CD4-positive, alpha-beta T cell (primary cell): ENCODE measurements at regions of chr19 and their contacts with region 1.

Region 1: DNA sequence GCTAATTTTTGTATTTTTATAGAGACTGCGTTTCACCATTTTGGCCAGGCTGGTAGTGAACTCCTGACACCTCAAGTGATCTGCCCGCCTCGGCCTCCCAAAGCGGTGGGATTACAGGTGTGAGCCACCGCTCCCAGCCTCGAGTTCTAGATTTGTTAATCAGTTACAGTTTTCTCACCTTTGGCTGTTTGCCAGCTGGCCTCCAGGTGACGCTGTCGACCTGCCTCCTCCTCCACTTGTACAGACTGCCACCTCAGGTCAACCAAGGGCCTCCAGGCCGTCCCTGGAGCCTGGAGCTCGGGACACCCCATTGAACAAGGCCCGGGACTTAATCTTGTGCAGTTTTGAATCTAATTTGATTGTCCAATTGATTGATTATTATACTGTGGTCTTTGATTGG is 45.5 kb downstream of the IER2 start:
- DNase-seq: peak; percentile 34 to 80 (median 56)
- ATAC-seq: no peak
- H3K4me3 ChIP-seq: no peak overlapping the region
- H3K4me3 Mint-ChIP-seq: peak overlapping the region; percentile 20
- H3K27ac ChIP-seq: no peak overlapping the region
- H3K27ac Mint-ChIP-seq: peak overlapping the region; percentile 51
- H3K4me1 ChIP-seq: peaks cover 48% of the 10 kb centered on the region
- H3K4me1 Mint-ChIP-seq: peaks cover 21% of the 10 kb centered on the region
- H3K27me3 ChIP-seq: no peaks in the 10 kb centered on the region
- H3K27me3 Mint-ChIP-seq: no peaks in the 10 kb centered on the region
- CTCF ChIP-seq: peak; percentile 59

Region 2: GRCh38 chr19:12722566-12723380 is 472.9 kb before region 1 on chr19:
- CTCF ChIA-PET with region 1: no interaction called
- POLR2A ChIA-PET with region 1: no interaction called
- intact Hi-C with region 1: no loop called
- DNase-seq: peak; percentile 80 to 99 (median 90)
- ATAC-seq: peak; percentile 87
- H3K4me3 ChIP-seq: peak overlapping the region; percentile 69
- H3K4me3 Mint-ChIP-seq: peak overlapping the region; percentile 98
- H3K27ac ChIP-seq: peak overlapping the region; percentile 48 to 78
- H3K27ac Mint-ChIP-seq: peak overlapping the region; percentile 89
- H3K4me1 ChIP-seq: peaks cover 39% of the 10 kb centered on the region
- H3K4me1 Mint-ChIP-seq: peaks cover 47% of the 10 kb centered on the region
- H3K27me3 ChIP-seq: no peaks in the 10 kb centered on the region
- H3K27me3 Mint-ChIP-seq: no peaks in the 10 kb centered on the region
- CTCF ChIP-seq: no peak

Region 3: DNA sequence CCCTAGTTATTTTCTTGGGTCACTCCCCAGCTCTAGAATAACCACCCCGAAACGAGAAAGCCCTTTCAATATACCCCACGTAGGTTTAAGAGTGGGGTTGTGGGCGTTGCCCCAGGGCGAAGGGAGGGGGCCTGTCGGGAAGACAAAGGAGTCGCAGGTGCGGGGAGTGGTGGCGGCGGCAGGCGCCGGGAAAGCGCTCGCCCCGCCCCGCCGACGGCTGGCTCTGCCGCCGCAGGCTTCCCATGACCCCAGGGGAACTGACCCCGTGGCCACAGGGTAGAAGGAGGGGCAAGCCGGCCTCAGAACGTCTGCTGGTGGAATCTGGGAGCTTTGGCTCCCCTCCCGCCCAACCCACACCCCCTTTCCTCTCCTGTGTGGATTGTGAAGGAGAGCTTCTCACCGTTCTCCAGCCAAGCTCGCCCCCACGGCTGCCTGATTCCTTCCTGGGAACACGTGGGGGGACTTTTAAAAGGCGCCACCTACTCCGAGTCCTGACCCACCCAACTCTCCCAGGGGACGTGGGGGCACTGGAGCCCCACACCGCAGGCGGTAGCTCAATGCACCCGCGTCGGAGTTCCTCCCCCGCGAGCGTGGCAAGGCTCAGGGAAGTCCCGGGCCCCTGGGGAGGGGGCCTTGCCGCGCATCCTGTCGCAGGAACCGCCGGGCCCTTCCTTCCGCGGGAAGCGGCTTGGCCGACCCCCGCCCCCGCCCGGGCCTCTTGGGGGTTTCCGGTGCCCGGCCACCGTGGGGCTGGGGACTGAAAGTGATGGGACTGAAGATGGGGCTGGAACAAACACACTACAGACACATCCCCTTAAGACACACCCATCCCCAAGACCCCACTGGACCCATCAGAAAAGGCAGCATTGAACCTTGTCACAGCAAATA is 40.0 kb before region 1 on chr19:
- CTCF ChIA-PET with region 1: interaction called, 27 read pairs
- POLR2A ChIA-PET with region 1: interaction called, 34 read pairs
- intact Hi-C with region 1: loop called (anchors 1 to 5 kb)
- DNase-seq: peak; percentile 43 to 93 (median 72)
- ATAC-seq: peak; percentile 18
- H3K4me3 ChIP-seq: peak overlapping the region; percentile 83
- H3K4me3 Mint-ChIP-seq: peak overlapping the region; percentile 99
- H3K27ac ChIP-seq: peak overlapping the region; percentile 96 to 97
- H3K27ac Mint-ChIP-seq: peak overlapping the region; percentile 98
- H3K4me1 ChIP-seq: peaks cover 59% of the 10 kb centered on the region
- H3K4me1 Mint-ChIP-seq: peaks cover 46% of the 10 kb centered on the region
- H3K27me3 ChIP-seq: no peaks in the 10 kb centered on the region
- H3K27me3 Mint-ChIP-seq: peaks cover 8% of the 10 kb centered on the region
- CTCF ChIP-seq: no peak

Region 4: DNA sequence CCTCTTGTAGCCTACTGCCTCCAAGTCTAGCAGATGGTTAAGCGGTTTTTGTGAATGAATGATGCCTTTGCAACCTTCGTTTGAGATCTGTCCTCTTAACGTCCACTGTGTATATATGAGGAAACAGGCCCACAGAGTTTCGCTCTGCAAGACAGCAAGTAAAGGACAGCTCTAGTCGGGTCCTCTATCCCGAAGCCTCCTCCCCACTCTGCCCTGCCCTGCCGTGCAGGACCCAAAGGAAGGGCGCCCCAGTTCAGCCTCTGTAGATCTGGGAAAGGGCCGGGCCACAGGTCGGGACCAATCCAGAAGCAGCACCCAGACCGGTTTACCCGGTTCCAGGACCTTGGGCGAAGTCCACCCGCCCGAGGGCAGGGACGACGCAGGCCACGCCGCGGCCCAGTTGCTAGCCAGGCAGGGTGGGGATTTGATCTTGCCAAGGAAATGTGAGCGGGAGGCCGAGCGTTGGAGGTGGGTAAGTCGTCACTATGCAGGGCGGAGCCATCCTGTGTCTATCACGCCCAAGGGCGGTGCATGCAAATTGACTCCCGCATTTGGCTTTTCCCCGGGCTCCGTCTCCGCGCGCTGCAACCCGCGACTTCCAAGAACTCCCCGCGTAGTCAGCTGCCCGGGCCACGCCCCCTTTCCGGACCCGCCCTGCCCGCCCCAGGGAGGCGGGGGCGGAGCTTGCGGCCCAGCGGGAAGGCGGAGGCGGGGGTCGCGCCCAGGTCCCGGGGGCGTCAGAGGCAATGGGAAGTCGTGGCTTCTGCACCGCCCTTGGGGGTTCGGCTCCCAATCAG is 33.0 kb before region 1 on chr19:
- CTCF ChIA-PET with region 1: interaction called, 30 read pairs
- POLR2A ChIA-PET with region 1: interaction called, 17 read pairs
- intact Hi-C with region 1: no loop called
- DNase-seq: peak; percentile 50 to 93 (median 80)
- ATAC-seq: peak; percentile 56
- H3K4me3 ChIP-seq: peak overlapping the region; percentile 60
- H3K4me3 Mint-ChIP-seq: peak overlapping the region; percentile 86
- H3K27ac ChIP-seq: peak overlapping the region; percentile 87 to 89
- H3K27ac Mint-ChIP-seq: peak overlapping the region; percentile 99
- H3K4me1 ChIP-seq: peaks cover 96% of the 10 kb centered on the region
- H3K4me1 Mint-ChIP-seq: peaks cover 71% of the 10 kb centered on the region
- H3K27me3 ChIP-seq: no peaks in the 10 kb centered on the region
- H3K27me3 Mint-ChIP-seq: no peaks in the 10 kb centered on the region
- CTCF ChIP-seq: no peak

Region 5: DNA sequence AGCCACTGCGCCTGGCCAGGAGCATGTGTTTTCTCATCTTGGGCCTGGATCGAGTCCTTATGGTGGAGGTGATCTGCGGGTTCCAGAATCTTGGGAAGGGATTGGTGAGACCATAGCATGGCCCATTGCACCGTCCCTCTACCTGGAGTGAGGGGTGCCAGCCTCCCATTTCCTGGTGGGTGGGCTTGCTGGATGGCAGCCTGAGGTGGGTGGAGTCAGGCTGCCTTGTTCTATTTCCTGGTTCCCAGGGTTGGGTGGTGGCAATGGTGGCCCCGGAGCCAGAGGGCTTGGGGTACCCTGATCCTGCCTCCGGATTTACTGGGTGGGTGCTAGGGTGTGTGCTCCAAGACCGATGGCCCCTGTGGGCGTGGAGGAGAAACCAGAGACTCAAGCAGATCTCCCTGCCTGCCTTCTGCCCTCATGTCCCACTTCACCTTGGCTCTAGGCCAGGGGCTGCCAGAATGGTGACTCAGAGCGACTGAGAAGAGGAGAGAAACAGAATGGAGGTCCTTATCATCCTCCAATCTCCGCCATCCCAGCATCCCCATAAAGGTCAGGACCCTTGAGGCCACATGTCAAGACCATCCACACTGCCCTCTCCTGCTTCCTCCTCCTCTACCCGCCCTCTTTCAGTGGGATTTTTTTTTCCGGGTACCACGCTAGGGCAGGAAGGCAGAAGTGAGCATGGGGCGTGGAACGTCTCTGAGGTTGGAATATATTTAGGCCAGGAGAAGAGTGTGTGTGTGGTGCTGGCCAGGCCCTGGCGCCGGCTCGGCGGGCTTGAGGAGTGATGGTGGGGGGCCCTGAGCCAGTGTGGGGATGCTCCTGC is 23.4 kb before region 1 on chr19:
- CTCF ChIA-PET with region 1: interaction called, 30 read pairs
- POLR2A ChIA-PET with region 1: interaction called, 13 read pairs
- intact Hi-C with region 1: loop called in 1 of 2 experiments (anchors 2 kb)
- DNase-seq: peak; percentile 49 to 88 (median 84)
- ATAC-seq: peak; percentile 24
- H3K4me3 ChIP-seq: peak overlapping the region; percentile 47
- H3K4me3 Mint-ChIP-seq: peak overlapping the region; percentile 87
- H3K27ac ChIP-seq: peak overlapping the region; percentile 65 to 83
- H3K27ac Mint-ChIP-seq: peak overlapping the region; percentile 99
- H3K4me1 ChIP-seq: peaks cover 85% of the 10 kb centered on the region
- H3K4me1 Mint-ChIP-seq: peaks cover 64% of the 10 kb centered on the region
- H3K27me3 ChIP-seq: no peaks in the 10 kb centered on the region
- H3K27me3 Mint-ChIP-seq: no peaks in the 10 kb centered on the region
- CTCF ChIP-seq: no peak

Region 6: DNA sequence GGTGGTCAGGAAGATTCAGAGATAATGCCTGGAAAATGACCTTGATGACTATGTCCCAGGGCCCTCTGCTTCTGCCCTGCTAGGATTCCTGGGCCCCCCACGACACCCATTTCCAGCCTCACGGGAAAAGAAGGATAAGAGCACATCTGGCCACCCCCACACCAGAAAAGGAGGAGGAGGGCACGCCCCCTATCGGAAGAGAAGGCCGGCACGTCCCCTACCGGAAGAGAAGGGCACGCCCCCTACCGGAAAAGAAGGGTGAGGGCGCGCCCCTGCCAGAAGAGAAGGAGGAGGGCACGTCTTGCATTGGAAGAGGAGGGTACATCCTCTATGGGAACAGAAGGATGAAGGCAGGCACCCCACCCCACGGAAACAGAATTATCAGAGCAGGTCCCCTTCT is 38.8 kb after region 1 on chr19:
- CTCF ChIA-PET with region 1: interaction called, 11 read pairs
- POLR2A ChIA-PET with region 1: no interaction called
- intact Hi-C with region 1: no loop called
- DNase-seq: peak; percentile 34 to 80 (median 57)
- ATAC-seq: peak; percentile 94
- H3K4me3 ChIP-seq: peak overlapping the region; percentile 12
- H3K4me3 Mint-ChIP-seq: peak overlapping the region; percentile 46
- H3K27ac ChIP-seq: no peak overlapping the region
- H3K27ac Mint-ChIP-seq: no peak overlapping the region
- H3K4me1 ChIP-seq: peaks cover 14% of the 10 kb centered on the region
- H3K4me1 Mint-ChIP-seq: peaks cover 14% of the 10 kb centered on the region
- H3K27me3 ChIP-seq: no peaks in the 10 kb centered on the region
- H3K27me3 Mint-ChIP-seq: no peaks in the 10 kb centered on the region
- CTCF ChIP-seq: peak; percentile 77

Region 7: GRCh38 chr19:13262450-13262849 is 66.8 kb after region 1 on chr19:
- CTCF ChIA-PET with region 1: interaction called, 28 read pairs
- POLR2A ChIA-PET with region 1: interaction called, 15 read pairs
- intact Hi-C with region 1: loop called (anchors 1 kb)
- DNase-seq: peak in 3 of 14 experiments; percentile 70 to 74 (median 71)
- ATAC-seq: peak; percentile 64
- H3K4me3 ChIP-seq: no peak overlapping the region
- H3K4me3 Mint-ChIP-seq: no peak overlapping the region
- H3K27ac ChIP-seq: no peak overlapping the region
- H3K27ac Mint-ChIP-seq: no peak overlapping the region
- H3K4me1 ChIP-seq: no peaks in the 10 kb centered on the region
- H3K4me1 Mint-ChIP-seq: no peaks in the 10 kb centered on the region
- H3K27me3 ChIP-seq: no peaks in the 10 kb centered on the region
- H3K27me3 Mint-ChIP-seq: peaks cover 17% of the 10 kb centered on the region
- CTCF ChIP-seq: peak; percentile 64

Region 8: DNA sequence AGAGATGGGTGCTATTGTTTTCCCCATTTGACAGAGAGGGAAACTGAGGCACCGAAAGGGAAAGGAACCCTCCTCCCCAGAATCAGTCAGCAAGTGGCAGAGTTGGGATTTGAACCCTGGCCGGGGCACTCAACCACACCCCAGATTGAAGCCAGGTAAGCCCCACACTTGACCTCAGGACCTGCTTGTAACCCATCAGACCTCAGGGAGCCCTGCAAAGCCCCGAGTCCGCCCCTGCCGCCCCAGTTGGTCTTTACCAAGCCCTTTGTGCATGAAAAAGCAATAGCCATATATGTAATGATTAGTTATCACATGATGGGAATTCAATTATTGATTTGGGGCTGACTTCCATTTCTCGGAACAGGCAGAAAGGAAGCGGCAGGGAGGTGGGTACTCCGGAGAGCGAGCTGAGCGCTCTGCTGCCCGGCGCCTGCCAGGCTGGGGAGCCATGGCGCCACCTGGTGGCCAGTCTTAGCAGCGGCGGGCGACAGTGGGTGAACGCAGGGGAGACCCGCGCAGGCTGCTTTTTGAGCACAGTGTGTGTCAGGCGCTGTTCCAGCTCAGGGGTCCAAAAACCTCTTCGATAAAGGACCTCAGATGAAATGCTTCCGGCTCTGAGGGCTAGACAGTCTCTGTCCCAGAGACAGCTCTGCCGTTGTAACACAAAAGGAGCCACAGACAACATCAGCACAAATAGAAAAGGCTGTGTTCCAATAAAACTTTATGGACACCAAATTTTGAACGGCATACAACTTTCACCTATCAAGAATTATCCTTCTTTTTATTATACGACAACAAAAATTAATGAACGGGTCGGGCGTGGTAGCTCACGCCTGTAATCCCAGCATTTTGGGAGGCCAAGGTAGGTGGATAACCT is 393.5 kb after region 1 on chr19:
- CTCF ChIA-PET with region 1: interaction called, 10 read pairs
- POLR2A ChIA-PET with region 1: no interaction called
- intact Hi-C with region 1: no loop called
- DNase-seq: peak; percentile 61 to 88 (median 80)
- ATAC-seq: peak; percentile 97
- H3K4me3 ChIP-seq: no peak overlapping the region
- H3K4me3 Mint-ChIP-seq: no peak overlapping the region
- H3K27ac ChIP-seq: no peak overlapping the region
- H3K27ac Mint-ChIP-seq: no peak overlapping the region
- H3K4me1 ChIP-seq: peaks cover 9% of the 10 kb centered on the region
- H3K4me1 Mint-ChIP-seq: no peaks in the 10 kb centered on the region
- H3K27me3 ChIP-seq: peaks cover 0 to 12% of the 10 kb centered on the region in 2 experiments
- H3K27me3 Mint-ChIP-seq: peaks cover 20% of the 10 kb centered on the region
- CTCF ChIP-seq: peak; percentile 99